ENCODE measurements at regions of chr4 and their contacts with region 1.

Region 1: GRCh38 chr4:24625091-24625490 is 40.7 kb upstream of the DHX15 start:
- DNase-seq: no peak
- H3K4me3 ChIP-seq: no peak overlapping the region
- H3K27ac ChIP-seq: no peak overlapping the region
- H3K4me1 ChIP-seq: no peaks in the 10 kb centered on the region
- H3K27me3 ChIP-seq: no peaks in the 10 kb centered on the region
- CTCF ChIP-seq: no peak
- POLR2A ChIP-seq: no peak

Region 2: DNA sequence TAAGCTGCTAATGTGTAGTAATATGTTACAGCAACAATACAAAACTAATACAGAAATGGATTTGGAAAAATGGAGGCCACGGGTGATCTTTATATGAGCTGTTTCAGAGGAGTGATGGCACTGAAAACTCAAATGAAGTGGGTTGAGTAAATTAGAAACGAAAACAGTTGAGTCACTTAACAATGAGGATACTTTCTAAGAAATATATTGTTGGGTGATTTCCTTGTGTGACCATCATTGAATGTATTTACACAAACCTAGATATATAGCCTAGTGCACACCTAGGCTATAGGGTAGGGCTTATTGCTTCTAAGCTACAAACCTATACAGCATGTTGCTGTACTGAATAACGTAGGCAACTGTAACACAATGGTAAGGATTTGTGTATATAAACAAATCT is 10.2 kb before region 1 on chr4:
- intact Hi-C with region 1: loop called (anchors 1 kb)
- DNase-seq: no peak
- H3K4me3 ChIP-seq: no peak overlapping the region
- H3K27ac ChIP-seq: no peak overlapping the region
- H3K4me1 ChIP-seq: no peaks in the 10 kb centered on the region
- H3K27me3 ChIP-seq: no peaks in the 10 kb centered on the region
- CTCF ChIP-seq: no peak
- POLR2A ChIP-seq: no peak

Region 3: DNA sequence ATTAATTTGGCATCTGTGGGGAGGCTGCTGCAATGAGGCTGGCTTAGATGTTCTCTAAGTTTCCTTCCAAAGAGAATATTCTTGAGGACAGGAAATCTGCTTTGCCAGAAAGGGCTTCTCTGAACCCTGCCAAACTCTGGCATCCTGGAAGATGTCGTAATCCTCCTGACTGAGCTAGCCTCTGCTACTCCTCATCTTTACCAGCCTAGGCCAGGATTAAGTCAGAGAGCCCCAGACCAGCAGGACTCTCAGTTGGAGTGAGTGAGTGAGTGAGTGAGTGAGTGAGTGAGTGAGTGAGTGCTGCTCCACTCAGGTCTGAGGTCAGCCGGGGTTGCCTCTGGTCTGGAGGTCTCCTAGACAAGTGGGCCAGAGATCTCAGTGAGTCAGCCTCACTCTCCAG is 65.3 kb after region 1 on chr4:
- intact Hi-C with region 1: no loop called
- DNase-seq: no peak
- H3K4me3 ChIP-seq: no peak overlapping the region
- H3K27ac ChIP-seq: no peak overlapping the region
- H3K4me1 ChIP-seq: no peaks in the 10 kb centered on the region
- H3K27me3 ChIP-seq: no peaks in the 10 kb centered on the region
- CTCF ChIP-seq: no peak
- POLR2A ChIP-seq: no peak

Region 4: GRCh38 chr4:25738162-25738561 is 1113.1 kb after region 1 on chr4:
- intact Hi-C with region 1: no loop called
- DNase-seq: no peak
- H3K4me3 ChIP-seq: no peak overlapping the region
- H3K27ac ChIP-seq: no peak overlapping the region
- H3K4me1 ChIP-seq: no peaks in the 10 kb centered on the region
- H3K27me3 ChIP-seq: no peaks in the 10 kb centered on the region
- CTCF ChIP-seq: no peak
- POLR2A ChIP-seq: no peak

Measured in breast epithelium (tissue), 4 donors.